ENCODE measurements at regions of chr5 and their contacts with region 1.

Region 1: DNA sequence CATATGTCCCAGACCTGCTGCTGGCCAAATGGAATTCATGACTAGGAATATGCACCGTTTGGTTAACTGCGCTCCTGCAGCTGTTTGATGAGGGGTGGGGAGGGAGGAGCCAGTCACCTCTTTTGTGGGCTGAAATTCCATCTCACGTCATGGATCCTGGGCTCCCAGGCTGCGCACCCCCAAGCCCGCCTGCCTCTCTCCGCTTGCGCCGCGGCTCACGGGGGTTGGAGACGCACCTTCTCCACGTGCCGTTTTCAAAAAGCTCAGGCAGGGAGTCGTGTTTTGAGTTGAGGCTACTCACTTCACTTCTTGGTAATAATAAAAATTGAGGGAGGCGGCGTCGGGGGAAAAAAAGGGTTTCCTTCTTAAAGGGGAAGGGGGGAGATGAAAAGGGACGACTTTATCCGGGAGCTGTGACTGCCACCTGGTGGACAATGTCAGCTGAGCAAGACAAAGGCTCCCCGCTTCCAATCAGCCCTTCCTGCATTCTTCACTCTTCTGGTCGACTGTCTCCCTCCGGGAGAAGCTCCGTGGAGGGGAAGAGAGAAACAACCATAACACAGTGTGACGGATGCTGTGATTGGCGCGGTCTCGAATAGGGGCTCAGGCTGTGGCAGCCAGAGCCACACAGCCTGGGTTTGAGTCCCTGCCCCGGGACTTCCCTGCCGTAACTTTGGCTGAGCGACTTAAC is 15.9 kb upstream of the C5orf47 start:
- DNase-seq: no peak
- H3K4me3 ChIP-seq: peak overlapping the region; percentile 36
- H3K27me3 ChIP-seq: no peaks in the 10 kb centered on the region; the same call in 1 of the 2 replicates
- CTCF ChIP-seq: peak; percentile 82

Region 2: GRCh38 chr5:173629628-173630027 is 343.4 kb before region 1 on chr5:
- CTCF ChIA-PET with region 1: interaction called, 150 read pairs
- POLR2A ChIA-PET with region 1: no interaction called
- DNase-seq: no peak
- H3K4me3 ChIP-seq: no peak overlapping the region
- H3K27me3 ChIP-seq: no peaks in the 10 kb centered on the region; the same call in 1 of the 2 replicates
- CTCF ChIP-seq: peak; percentile 38

Region 3: DNA sequence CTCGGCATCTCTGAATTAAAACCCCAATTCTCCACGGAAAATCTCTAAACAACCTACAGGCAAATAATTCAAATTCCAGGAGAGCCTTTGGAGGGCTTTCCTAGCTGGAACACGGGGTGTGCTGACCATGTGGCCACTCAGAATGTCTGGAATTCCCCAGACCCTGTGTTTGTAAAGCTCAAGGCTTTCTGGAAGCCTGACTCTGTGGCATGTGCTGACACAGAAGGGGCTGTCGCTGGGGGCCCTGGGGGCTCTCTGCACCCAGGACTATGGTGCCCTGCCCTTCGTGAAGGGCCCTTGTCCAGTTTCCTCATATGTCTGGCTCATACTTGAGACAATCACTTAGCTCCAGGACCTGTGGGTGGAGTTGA is 327.6 kb before region 1 on chr5:
- CTCF ChIA-PET with region 1: interaction called, 16 read pairs
- POLR2A ChIA-PET with region 1: no interaction called
- DNase-seq: peak; percentile 19
- H3K4me3 ChIP-seq: no peak overlapping the region
- H3K27me3 ChIP-seq: no peaks in the 10 kb centered on the region
- CTCF ChIP-seq: no peak

Region 4: GRCh38 chr5:173736923-173737412 is 236.1 kb before region 1 on chr5:
- CTCF ChIA-PET with region 1: no interaction called
- POLR2A ChIA-PET with region 1: no interaction called
- DNase-seq: no peak
- H3K4me3 ChIP-seq: no peak overlapping the region
- H3K27me3 ChIP-seq: peaks cover 1% of the 10 kb centered on the region; the same call in 1 of the 2 replicates
- CTCF ChIP-seq: no peak

Region 5: DNA sequence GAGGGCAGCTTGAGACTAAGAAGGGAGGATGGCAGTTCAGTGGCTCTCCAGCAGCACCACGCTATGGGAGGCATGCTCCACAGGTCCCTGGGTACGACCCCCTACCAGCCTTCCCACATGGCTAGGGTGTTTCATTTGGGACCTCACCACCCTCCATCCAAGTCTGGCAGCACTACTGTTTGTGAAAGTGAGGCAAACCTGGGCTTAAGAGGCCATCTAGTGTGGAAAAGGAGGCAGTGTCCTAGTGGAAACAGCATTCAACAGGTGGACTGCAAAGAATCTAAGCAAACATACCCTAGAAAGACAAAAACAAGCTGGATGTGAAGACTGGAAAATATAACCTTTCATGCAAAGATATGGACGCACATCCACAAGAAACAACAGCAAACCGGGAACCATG is 11.1 kb after region 1 on chr5:
- CTCF ChIA-PET with region 1: interaction called, 17 read pairs
- POLR2A ChIA-PET with region 1: no interaction called
- DNase-seq: no peak
- H3K4me3 ChIP-seq: no peak overlapping the region
- H3K27me3 ChIP-seq: peaks cover 4% of the 10 kb centered on the region; the same call in 1 of the 2 replicates
- CTCF ChIP-seq: peak; percentile 49; the same call in 1 of the 2 replicates

Region 6: GRCh38 chr5:174106997-174107655 is 134.1 kb after region 1 on chr5:
- CTCF ChIA-PET with region 1: no interaction called
- POLR2A ChIA-PET with region 1: no interaction called
- DNase-seq: no peak
- H3K4me3 ChIP-seq: no peak overlapping the region
- H3K27me3 ChIP-seq: peaks cover 2% of the 10 kb centered on the region; the same call in 1 of the 2 replicates
- CTCF ChIP-seq: no peak

Region 7: DNA sequence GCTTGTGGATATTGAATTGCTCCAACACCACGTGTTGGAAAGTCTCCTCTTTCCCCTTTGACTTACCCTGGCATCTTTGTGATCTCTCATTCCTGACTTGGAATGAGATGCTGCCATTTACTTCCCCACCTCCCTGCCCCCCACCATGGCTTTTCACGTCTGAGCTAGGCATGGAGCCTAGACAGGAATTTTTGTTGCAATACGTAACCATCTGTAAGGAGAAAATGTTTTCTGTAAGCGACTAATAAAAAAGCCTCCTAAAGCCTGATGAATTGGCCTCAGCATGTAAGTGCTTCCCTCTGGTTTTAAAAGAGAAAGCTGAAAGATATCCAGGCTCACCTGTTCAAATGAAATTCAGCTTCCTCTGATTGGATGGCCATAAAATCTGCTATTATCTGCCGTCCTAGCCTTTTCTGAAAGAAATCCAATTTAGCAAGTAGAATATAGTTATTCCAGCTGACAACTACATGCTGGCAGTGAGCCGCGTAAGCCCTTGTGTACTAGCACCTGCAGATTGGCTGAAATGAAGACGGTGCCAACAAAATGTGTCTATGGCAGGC is 272.5 kb after region 1 on chr5:
- CTCF ChIA-PET with region 1: no interaction called
- POLR2A ChIA-PET with region 1: no interaction called
- DNase-seq: no peak
- H3K4me3 ChIP-seq: no peak overlapping the region
- H3K27me3 ChIP-seq: no peaks in the 10 kb centered on the region
- CTCF ChIP-seq: no peak

Region 8: GRCh38 chr5:174317259-174317894 is 344.3 kb after region 1 on chr5:
- CTCF ChIA-PET with region 1: interaction called, 16 read pairs
- POLR2A ChIA-PET with region 1: no interaction called
- DNase-seq: no peak
- H3K4me3 ChIP-seq: no peak overlapping the region
- H3K27me3 ChIP-seq: peaks cover 2% of the 10 kb centered on the region
- CTCF ChIP-seq: peak; percentile 92